Left ventricle myocardium inferior (tissue), 1 donor: ENCODE measurements at regions of chr12 and their contacts with region 1.

Region 1: GRCh38 chr12:114508529-114509129 is 102.7 kb upstream of the TBX5 start:
- DNase-seq: peak; percentile 45
- H3K4me3 ChIP-seq: no peak overlapping the region
- H3K27ac ChIP-seq: no peak overlapping the region
- H3K4me1 ChIP-seq: no peaks in the 10 kb centered on the region
- H3K27me3 ChIP-seq: peaks cover 88% of the 10 kb centered on the region
- CTCF ChIP-seq: peak; percentile 83

Region 2: DNA sequence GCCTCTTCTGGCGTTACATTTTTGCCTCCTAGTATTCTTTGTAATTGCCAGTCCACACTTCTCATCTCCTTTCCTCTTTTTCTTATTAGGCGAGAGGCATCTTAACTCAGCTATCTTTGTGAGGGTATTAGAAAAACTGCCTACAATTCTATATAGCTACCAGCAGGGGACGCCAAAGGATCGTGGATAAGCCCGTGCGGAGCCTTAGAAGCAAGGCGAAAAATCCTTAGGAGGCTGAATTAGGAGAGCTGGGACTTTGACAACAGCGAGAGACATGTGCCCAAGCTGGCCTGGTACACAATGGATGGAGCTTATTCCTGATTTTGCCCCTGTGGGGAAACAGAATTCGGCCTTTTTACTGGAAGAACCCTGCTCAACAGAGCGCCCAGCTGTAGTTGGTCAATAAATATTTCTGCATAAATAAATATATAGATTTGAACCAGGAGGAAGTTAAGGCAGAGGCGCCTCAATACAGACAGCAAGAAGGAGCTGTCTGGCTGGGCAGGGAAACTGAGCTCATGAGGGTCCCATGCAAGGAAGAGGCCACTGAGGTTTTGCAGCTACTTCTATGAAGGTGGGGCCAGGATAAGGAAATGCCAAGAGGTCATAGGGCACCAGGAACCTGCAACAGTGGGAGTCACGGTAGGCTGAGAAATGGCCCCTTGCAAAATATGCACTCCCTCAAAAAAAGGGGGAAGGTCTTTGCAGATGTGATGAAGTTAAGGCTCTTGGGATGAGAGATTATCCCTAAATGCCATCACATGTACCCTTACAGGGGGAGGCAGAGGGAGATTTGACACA is 527.9 kb before region 1 on chr12:
- intact Hi-C with region 1: loop called (anchors 5 kb)
- DNase-seq: no peak
- H3K4me3 ChIP-seq: no peak overlapping the region
- H3K27ac ChIP-seq: no peak overlapping the region
- H3K4me1 ChIP-seq: no peaks in the 10 kb centered on the region
- H3K27me3 ChIP-seq: peaks cover 82% of the 10 kb centered on the region
- CTCF ChIP-seq: peak; percentile 91